ENCODE measurements at regions of chr12 and their contacts with region 1.

Region 1: GRCh38 chr12:52865090-52865944 is 16.5 kb upstream of the KRT78 start:
- DNase-seq: peak; percentile 63
- H3K4me3 ChIP-seq: no peak overlapping the region
- H3K27ac ChIP-seq: no peak overlapping the region
- H3K4me1 ChIP-seq: peaks cover 23% of the 10 kb centered on the region
- H3K27me3 ChIP-seq: no peaks in the 10 kb centered on the region
- CTCF ChIP-seq: peak; percentile 87 to 92

Region 2: DNA sequence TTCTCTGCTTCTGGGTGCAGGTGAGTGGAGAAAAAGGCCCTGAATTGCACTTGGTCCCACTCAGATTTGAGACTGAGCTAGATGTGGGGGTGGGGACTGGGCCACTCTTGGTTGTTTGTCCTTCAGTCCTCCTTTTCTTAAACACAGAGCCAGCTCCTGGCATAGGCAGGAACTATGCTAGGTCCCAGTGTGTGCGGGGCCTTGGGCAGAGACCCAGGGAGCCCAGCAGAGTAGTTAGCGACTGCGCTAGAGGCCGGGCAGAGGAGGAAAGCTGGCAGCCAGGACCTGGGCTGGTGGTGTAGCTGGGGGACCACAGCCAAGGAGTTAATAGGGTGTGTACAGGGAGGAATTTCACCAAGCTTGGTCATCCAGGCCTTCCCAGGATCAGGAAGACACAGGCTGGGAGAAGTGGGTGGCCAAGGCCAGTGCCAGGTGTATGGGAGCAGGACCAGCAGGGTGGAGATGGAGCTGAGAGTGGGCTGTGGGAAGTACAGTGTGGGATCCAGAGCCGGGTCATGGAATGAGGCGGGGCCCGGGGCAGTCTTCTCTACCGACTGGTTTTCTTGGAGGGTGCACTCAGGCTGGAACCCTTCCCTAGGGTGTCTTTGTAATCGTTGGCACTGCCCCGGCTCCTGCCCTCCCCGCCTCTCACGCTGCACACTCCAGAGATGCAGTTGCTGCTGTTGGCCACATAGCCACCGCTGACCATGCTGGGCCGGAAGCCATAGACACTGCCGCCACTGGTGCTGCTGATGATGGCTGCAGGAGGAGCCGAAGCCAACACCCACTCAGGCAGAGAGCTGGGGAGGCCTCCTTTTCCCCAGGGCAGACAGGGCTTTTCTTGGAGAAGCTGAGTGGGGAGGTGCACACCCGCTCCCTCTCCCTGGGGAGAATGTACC is 321.1 kb before region 1 on chr12:
- CTCF ChIA-PET with region 1: no interaction called
- dilution Hi-C with region 1: no loop called
- in situ Hi-C with region 1: no loop called
- intact Hi-C with region 1: loop called (anchors 1 kb)
- DNase-seq: no peak
- H3K4me3 ChIP-seq: no peak overlapping the region
- H3K27ac ChIP-seq: no peak overlapping the region
- H3K4me1 ChIP-seq: peaks cover 14% of the 10 kb centered on the region
- H3K27me3 ChIP-seq: no peaks in the 10 kb centered on the region
- CTCF ChIP-seq: peak; percentile 20 to 26

Region 3: DNA sequence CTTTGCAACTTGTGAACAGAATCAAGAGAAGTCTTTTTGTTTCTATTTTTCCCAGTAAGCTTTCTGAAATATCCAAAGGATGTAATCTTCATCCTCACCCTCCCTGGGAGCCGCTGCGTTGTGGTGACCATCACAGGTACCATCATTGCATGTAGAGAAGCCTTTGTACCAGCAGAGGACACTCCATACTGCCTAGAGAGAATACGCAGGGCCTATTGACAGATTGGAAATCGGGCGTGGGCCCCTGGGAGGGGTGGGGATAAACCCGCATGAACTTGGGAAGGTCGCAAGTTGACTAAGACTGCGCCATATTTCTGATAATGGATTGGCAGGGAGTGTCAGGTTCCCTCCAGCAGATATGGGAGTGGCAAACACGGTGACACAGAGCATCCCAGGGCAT is 197.8 kb before region 1 on chr12:
- CTCF ChIA-PET with region 1: no interaction called
- dilution Hi-C with region 1: no loop called
- in situ Hi-C with region 1: no loop called
- intact Hi-C with region 1: loop called (anchors 2 kb)
- DNase-seq: no peak
- H3K4me3 ChIP-seq: no peak overlapping the region
- H3K27ac ChIP-seq: no peak overlapping the region
- H3K4me1 ChIP-seq: peaks cover 18% of the 10 kb centered on the region
- H3K27me3 ChIP-seq: peaks cover 2% of the 10 kb centered on the region
- CTCF ChIP-seq: peak in 1 of 2 donors; percentile 40

Region 4: GRCh38 chr12:52741392-52742195 is 123.7 kb before region 1 on chr12:
- CTCF ChIA-PET with region 1: no interaction called
- dilution Hi-C with region 1: no loop called
- in situ Hi-C with region 1: no loop called
- intact Hi-C with region 1: loop called (anchors 5 kb)
- DNase-seq: peak; percentile 45
- H3K4me3 ChIP-seq: no peak overlapping the region
- H3K27ac ChIP-seq: no peak overlapping the region
- H3K4me1 ChIP-seq: no peaks in the 10 kb centered on the region
- H3K27me3 ChIP-seq: peaks cover under 1% of the 10 kb centered on the region
- CTCF ChIP-seq: no peak

Region 5: DNA sequence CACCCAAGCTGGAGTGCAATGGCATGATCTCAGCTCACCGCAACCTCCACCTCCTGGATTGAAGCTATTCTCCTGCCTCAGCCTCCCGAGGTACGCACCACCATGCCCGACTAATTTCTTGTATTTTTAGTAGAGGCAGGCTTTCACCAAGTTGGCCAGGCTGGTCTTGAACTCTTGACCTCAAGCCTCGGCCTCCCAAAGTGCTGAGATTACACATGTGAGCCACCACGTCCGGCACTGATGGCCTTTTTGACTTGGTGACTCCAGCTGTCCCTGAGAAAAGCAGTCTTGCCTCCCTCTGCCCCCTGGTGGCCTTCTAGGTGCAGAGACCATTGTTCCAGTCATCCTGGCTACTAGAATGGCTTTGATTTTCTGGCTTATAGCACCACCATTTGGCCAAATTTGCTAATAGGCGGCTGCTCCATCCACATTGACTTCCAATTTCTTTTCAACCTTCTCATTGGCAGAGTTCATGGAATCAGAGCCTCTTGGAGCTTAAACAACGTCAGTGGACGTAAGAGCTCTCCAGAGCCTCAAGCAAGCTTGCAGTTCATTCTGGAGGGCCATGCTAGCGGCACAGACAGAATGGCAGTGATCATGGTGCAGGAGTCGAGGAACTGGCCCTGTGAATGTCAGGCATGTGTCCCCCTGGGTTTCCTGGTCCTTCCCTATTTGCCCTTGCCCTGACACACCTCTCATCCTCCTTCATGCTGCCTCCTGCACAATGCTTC is 115.5 kb after region 1 on chr12:
- CTCF ChIA-PET with region 1: no interaction called
- dilution Hi-C with region 1: no loop called
- in situ Hi-C with region 1: no loop called
- intact Hi-C with region 1: no loop called
- DNase-seq: peak; percentile 80
- H3K4me3 ChIP-seq: no peak overlapping the region
- H3K27ac ChIP-seq: no peak overlapping the region
- H3K4me1 ChIP-seq: no peaks in the 10 kb centered on the region
- H3K27me3 ChIP-seq: no peaks in the 10 kb centered on the region
- CTCF ChIP-seq: peak; percentile 99

Region 6: GRCh38 chr12:54285150-54286041 is 1420.1 kb after region 1 on chr12:
- CTCF ChIA-PET with region 1: no interaction called
- dilution Hi-C with region 1: no loop called
- in situ Hi-C with region 1: no loop called
- intact Hi-C with region 1: no loop called
- DNase-seq: no peak
- H3K4me3 ChIP-seq: peak overlapping the region in 2 of 3 experiments; percentile 3 to 18
- H3K27ac ChIP-seq: no peak overlapping the region
- H3K4me1 ChIP-seq: peaks cover 23% of the 10 kb centered on the region
- H3K27me3 ChIP-seq: no peaks in the 10 kb centered on the region
- CTCF ChIP-seq: peak; percentile 21 to 27

Measured in mammary epithelial cell (primary cell).